ENCODE measurements at regions of chr4 and their contacts with region 1.

Region 1: DNA sequence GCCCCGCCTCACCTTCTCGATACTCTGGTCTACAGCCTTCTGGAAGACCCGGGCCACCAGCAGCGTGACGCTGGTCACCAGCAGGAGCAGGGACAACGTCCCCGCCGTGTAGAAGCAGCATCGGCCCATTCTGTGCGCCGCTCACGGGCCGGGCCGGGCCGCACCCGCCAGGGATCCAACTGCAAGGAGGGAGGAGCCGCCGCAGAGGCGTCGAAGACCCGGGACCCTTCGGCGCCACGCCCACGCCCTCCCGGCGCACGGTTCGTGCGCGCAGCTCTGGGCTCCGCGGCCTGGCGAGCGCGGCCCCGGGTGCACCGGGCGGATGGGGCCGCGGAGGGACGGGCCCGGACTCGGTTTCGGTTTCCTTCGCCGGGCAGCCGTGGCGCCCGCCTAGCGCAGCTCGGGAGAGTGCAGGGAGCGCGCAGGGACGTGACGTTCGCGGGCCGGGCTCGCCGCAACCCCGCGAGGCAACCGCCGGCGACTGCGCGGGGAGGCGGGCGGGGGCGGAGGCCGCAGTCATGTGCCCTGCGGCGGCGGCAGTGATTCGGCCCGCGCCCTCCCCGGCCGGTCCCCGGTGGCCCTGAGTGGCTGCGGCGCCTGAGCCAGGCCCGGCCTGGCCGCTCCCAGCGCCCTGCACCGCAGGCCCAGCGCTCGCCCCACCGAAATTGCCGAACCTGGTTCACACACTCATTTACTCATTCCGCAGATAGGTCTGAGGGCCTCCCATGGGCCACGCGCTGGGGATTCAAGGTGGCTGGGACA is at the start of gene SCARB2:
- DNase-seq: peak; percentile 93 to 96
- ATAC-seq: peak; percentile 96
- H3K4me3 ChIP-seq: peak within 1 kb of the TSS; percentile 38 to 91
- H3K27ac ChIP-seq: peak within 1 kb of the TSS; percentile 38 to 94
- H3K4me1 ChIP-seq: peaks cover 4 to 5% of the 10 kb centered on the region in 2 donors
- H3K27me3 ChIP-seq: no peaks in the 10 kb centered on the region
- total RNA-seq, gene SCARB2: 138 to 154 TPM

Region 2: GRCh38 chr4:76087007-76087769 is 126.4 kb before region 1 on chr4:
- intact Hi-C with region 1: no loop called
- DNase-seq: no peak
- ATAC-seq: peak; percentile 67
- H3K4me3 ChIP-seq: no peak overlapping the region
- H3K27ac ChIP-seq: no peak overlapping the region
- H3K4me1 ChIP-seq: no peaks in the 10 kb centered on the region
- H3K27me3 ChIP-seq: no peaks in the 10 kb centered on the region

Region 3: GRCh38 chr4:76197971-76198410 is 15.6 kb before region 1 on chr4:
- intact Hi-C with region 1: loop called in 1 of 2 experiments (anchors 2 kb)
- DNase-seq: peak in 1 of 2 donors; percentile 83
- ATAC-seq: peak; percentile 61
- H3K4me3 ChIP-seq: no peak overlapping the region
- H3K27ac ChIP-seq: peak overlapping the region in 1 of 2 donors; percentile 62
- H3K4me1 ChIP-seq: peaks cover 7 to 9% of the 10 kb centered on the region in 2 donors
- H3K27me3 ChIP-seq: no peaks in the 10 kb centered on the region

Region 4: GRCh38 chr4:76235915-76236314 is 22.3 kb after region 1 on chr4:
- intact Hi-C with region 1: loop called in 1 of 2 experiments (anchors 2 kb)
- DNase-seq: no peak
- ATAC-seq: no peak
- H3K4me3 ChIP-seq: no peak overlapping the region
- H3K27ac ChIP-seq: no peak overlapping the region
- H3K4me1 ChIP-seq: peaks cover 0 to 3% of the 10 kb centered on the region in 2 donors
- H3K27me3 ChIP-seq: no peaks in the 10 kb centered on the region

Region 5: DNA sequence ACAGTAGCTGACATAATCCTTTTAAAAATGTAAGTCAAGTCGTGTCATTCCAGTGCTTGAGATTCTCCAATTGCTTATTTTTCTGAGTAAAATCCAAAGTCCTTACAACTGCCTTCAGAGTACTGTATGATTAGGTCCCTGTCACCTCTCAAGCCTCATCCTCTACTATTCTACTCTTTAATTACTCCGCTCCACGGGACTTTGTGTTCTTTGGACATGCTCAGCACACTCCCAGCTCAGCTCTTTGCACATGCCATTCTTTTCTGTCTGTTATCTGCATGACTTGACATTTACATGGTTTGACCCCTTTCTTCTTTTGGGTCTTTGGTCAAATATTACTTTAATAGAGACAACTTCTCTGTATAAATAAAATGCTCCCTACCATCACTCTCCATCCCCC is 53.0 kb after region 1 on chr4:
- intact Hi-C with region 1: no loop called
- DNase-seq: no peak
- ATAC-seq: no peak
- H3K4me3 ChIP-seq: no peak overlapping the region
- H3K27ac ChIP-seq: no peak overlapping the region
- H3K4me1 ChIP-seq: no peaks in the 10 kb centered on the region
- H3K27me3 ChIP-seq: no peaks in the 10 kb centered on the region

Measured in aorta (tissue), 5 donors.